ENCODE measurements at regions of chr3 and their contacts with region 1.

Region 1: GRCh38 chr3:72347819-72348319 is 500.4 kb downstream of the SHQ1 start:
- DNase-seq: peak in 5 of 9 donors; percentile 37 to 44 (median 41)
- ATAC-seq: peak; percentile 44
- H3K4me3 ChIP-seq: no peak overlapping the region
- H3K4me3 Mint-ChIP-seq: peak overlapping the region in 7 of 10 donors; percentile 11 to 71 (median 60)
- H3K27ac ChIP-seq: peak overlapping the region; percentile 22
- H3K27ac Mint-ChIP-seq: peak overlapping the region in 8 of 9 donors; percentile 70 to 90 (median 86)
- H3K4me1 ChIP-seq: peaks cover 3 to 63% of the 10 kb centered on the region in 2 donors
- H3K4me1 Mint-ChIP-seq: peaks cover 37 to 69% (median 64%) of the 10 kb centered on the region in 7 donors
- H3K27me3 ChIP-seq: no peaks in the 10 kb centered on the region
- H3K27me3 Mint-ChIP-seq: peaks cover 0 to 12% (median 0%) of the 10 kb centered on the region in 5 donors

Region 2: GRCh38 chr3:72332689-72333088 is 15.2 kb before region 1 on chr3:
- CTCF ChIA-PET with region 1: no interaction called
- POLR2A ChIA-PET with region 1: interaction called, 3 read pairs
- intact Hi-C with region 1: loop called in 1 of 2 experiments (anchors 2 kb)
- DNase-seq: no peak
- ATAC-seq: no peak
- H3K4me3 ChIP-seq: no peak overlapping the region
- H3K4me3 Mint-ChIP-seq: no peak overlapping the region
- H3K27ac ChIP-seq: no peak overlapping the region
- H3K27ac Mint-ChIP-seq: no peak overlapping the region
- H3K4me1 ChIP-seq: no peaks in the 10 kb centered on the region
- H3K4me1 Mint-ChIP-seq: peaks cover 0 to 11% (median 0%) of the 10 kb centered on the region in 7 donors
- H3K27me3 ChIP-seq: no peaks in the 10 kb centered on the region
- H3K27me3 Mint-ChIP-seq: peaks cover 0 to 9% (median 0%) of the 10 kb centered on the region in 5 donors